ENCODE measurements at regions of chr6 and their contacts with region 1.

Region 1: DNA sequence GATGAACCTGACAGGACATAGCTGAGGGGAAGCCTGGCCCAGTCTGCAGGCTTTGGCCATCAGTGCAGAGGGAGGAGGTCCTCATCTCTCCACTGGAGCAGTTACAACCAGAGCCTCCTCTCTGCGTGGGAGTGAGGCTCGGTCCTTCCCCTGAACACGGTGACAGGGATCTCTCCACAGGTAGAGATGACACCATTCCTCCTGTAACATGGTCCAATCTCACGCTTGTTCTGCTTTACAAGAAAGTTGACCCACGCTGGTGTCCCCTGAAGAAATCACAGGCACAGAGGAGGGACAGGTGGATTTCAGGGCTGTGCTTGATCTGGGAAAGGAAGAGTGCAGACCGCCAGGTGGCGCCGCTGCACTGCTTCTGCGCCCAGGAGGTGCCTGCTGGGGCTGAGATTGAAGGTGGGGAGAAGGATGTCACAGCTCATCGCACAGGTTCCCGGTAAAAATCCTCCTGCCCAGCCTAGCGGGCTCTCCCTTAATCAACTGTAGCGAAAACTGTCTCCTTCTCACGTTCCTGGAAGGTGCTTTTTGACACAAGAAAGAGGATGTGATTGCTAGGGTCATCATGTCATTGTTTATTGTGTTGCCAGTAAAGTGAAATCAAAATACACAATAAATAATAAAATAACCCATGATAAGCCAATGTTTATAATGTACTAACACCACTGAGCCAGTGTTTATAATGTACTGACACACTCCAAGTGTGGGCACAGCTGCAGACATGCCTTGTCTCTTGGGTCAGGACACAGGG is 20.4 kb downstream of the HLA-G start:
- DNase-seq: peak; percentile 70
- H3K4me3 ChIP-seq: no peak overlapping the region
- H3K27ac ChIP-seq: no peak overlapping the region
- H3K4me1 ChIP-seq: no peaks in the 10 kb centered on the region
- CTCF ChIP-seq: peak; percentile 97

Region 2: DNA sequence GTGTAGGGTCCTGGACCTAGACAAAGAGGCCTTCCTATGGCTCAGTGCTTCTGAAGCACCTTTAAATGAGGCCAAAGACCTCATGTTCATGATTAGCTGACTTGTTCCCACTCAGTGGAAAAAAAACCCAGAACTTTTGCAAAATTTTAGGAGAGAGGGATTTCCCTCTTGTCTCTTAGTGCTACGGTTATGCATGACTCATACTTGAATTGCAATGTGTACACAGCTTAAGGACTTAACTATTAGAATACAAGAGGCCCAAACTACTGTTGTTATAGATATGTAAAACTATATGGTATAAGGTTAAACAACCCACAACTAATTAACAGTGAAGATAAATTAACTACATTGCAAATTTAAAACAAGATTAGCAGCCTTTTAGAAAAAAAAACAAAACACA is 61.9 kb after region 1 on chr6:
- CTCF ChIA-PET with region 1: no interaction called
- POLR2A ChIA-PET with region 1: no interaction called
- intact Hi-C with region 1: no loop called
- DNase-seq: no peak
- H3K4me3 ChIP-seq: no peak overlapping the region
- H3K27ac ChIP-seq: no peak overlapping the region
- H3K4me1 ChIP-seq: no peaks in the 10 kb centered on the region
- CTCF ChIP-seq: no peak

Region 3: GRCh38 chr6:29976588-29977424 is 128.8 kb after region 1 on chr6:
- CTCF ChIA-PET with region 1: no interaction called
- POLR2A ChIA-PET with region 1: no interaction called
- intact Hi-C with region 1: no loop called
- DNase-seq: peak; percentile 29
- H3K4me3 ChIP-seq: peak overlapping the region; percentile 53
- H3K27ac ChIP-seq: no peak overlapping the region
- H3K4me1 ChIP-seq: peaks cover 10% of the 10 kb centered on the region
- CTCF ChIP-seq: 0 out of 2 replicates have a peak, but pooled peaks have one; percentile 13

Region 4: DNA sequence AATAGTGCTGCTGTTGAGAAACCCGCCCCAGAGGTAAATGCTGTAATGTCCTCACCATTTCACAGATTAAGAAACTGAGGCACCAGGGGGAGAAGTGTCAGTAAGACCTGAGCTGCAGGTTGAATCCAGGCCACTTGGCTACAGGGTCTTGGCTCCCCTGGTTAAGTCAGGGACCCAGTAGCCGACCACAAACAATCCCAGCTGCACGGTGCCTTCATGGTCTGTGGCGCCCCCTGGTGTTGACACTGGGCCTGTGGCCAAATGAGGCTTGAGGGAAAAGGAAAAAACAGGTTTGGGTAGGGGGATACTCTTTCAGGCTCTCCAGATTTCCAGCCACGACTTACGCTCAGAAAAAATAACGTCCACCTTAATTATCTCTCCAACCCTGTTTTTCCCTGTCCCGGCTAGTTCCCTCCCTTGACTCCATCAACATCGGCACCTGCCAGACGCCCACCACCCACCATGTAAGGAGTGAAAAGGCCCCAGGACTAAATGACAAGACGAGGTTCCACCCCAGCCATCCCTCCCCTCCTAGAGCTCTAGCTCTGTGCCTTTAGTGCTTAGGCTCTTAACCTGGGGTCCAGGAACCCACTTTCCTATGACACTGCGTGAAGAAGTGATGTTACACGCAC is 165.4 kb after region 1 on chr6:
- CTCF ChIA-PET with region 1: no interaction called
- POLR2A ChIA-PET with region 1: no interaction called
- intact Hi-C with region 1: loop called (anchors 1 kb)
- DNase-seq: peak; percentile 51
- H3K4me3 ChIP-seq: no peak overlapping the region
- H3K27ac ChIP-seq: no peak overlapping the region
- H3K4me1 ChIP-seq: no peaks in the 10 kb centered on the region
- CTCF ChIP-seq: peak; percentile 94

Region 5: DNA sequence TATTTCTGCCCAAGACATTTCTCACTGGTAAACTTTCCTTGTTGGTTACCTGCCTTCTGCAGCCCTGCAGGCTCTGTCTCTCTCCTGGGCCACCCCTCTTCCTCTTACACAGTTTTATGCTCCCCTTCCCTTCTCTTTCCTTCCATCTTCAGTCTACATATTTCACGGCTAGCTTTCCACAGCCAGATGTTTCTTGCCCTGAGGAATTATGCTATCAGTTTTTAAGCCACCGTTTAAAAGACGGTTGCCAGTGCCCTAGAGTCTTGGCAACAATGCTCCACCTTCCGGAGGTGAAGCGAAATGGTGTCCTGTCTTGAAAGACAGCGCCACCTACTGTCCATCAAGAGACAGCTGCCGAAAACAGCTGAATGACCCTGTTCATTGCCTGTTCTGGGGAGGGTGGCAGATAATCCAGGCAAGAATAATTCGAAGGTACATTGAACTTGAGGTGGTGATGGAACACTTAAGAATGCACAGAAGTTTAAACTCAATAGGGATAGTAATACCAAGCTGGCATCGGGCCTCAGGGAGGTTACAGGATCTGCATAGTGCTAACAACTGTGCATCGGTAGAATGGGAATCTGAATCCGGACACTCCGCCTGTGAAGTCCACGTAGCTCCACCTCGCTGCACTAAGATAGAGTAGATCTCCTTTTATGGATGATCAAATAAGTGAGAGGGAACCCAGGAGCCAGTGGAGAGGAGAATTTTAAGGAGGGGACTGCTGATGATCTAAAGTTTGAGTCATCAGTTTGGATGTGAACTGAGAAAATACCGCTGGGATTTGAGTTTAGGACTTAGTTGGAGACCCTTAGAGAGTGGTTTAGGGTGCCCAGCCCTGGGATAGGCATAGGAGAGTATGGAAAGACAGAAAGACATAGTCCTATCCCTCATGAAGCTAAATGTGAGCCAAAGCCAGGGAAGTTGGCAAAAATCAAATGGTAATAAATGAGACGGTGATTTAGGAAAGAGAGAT is 283.1 kb after region 1 on chr6:
- CTCF ChIA-PET with region 1: no interaction called
- POLR2A ChIA-PET with region 1: no interaction called
- intact Hi-C with region 1: loop called (anchors 1 kb)
- DNase-seq: peak; percentile 89
- H3K4me3 ChIP-seq: no peak overlapping the region
- H3K27ac ChIP-seq: no peak overlapping the region
- H3K4me1 ChIP-seq: peaks cover 4% of the 10 kb centered on the region
- CTCF ChIP-seq: peak; percentile 100

Region 6: GRCh38 chr6:30194797-30195690 is 347.0 kb after region 1 on chr6:
- CTCF ChIA-PET with region 1: no interaction called
- POLR2A ChIA-PET with region 1: no interaction called
- intact Hi-C with region 1: no loop called
- DNase-seq: no peak
- H3K4me3 ChIP-seq: no peak overlapping the region
- H3K27ac ChIP-seq: no peak overlapping the region
- H3K4me1 ChIP-seq: peaks cover under 1% of the 10 kb centered on the region
- CTCF ChIP-seq: no peak